HepG2 (cell line): ENCODE measurements at regions of chr18 and their contacts with region 1.

Region 1: GRCh38 chr18:70781860-70782453 is 493.1 kb downstream of the SOCS6 start:
- DNase-seq: peak; percentile 27
- ATAC-seq: peak; percentile 95
- H3K4me3 ChIP-seq: no peak overlapping the region
- H3K27ac ChIP-seq: no peak overlapping the region
- H3K4me1 ChIP-seq: no peaks in the 10 kb centered on the region
- H3K27me3 ChIP-seq: no peaks in the 10 kb centered on the region
- CTCF ChIP-seq: peak; percentile 82
- EP300 ChIP-seq: no peak
- POLR2A ChIP-seq: no peak
- RAD21 ChIP-seq: peak; percentile 20; the same call in 1 of the 2 replicates

Region 2: GRCh38 chr18:71105078-71105819 is 323.3 kb after region 1 on chr18:
- CTCF ChIA-PET with region 1: no interaction called
- POLR2A ChIA-PET with region 1: no interaction called
- in situ Hi-C with region 1: no loop called
- intact Hi-C with region 1: no loop called
- DNase-seq: no peak
- ATAC-seq: no peak
- H3K4me3 ChIP-seq: no peak overlapping the region
- H3K27ac ChIP-seq: no peak overlapping the region
- H3K4me1 ChIP-seq: no peaks in the 10 kb centered on the region
- H3K27me3 ChIP-seq: no peaks in the 10 kb centered on the region
- CTCF ChIP-seq: no peak
- EP300 ChIP-seq: no peak
- POLR2A ChIP-seq: no peak
- RAD21 ChIP-seq: no peak

Region 3: DNA sequence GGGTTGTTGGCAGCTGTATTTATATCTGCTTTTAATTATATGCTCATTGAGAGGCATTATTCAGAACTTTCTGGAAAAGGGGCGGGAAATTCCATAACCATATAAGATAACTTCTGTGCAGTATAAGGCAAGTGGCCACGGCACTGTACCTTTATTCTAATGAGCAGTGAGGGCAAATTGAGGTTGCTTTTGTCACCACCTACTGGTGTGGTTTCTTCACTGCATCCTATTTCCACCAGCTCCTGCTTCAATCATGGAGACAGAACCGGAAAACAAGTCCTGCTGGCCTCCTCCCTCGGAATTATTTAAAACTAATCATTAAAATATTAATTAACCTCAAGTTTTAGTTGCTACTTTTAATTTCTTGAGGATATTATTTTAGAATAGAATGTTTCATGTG is 1002.8 kb after region 1 on chr18:
- CTCF ChIA-PET with region 1: no interaction called
- POLR2A ChIA-PET with region 1: no interaction called
- in situ Hi-C with region 1: no loop called
- intact Hi-C with region 1: loop called (anchors 2 kb)
- DNase-seq: peak; percentile 10
- ATAC-seq: peak; percentile 56; the same call in 2 of the 3 replicates
- H3K4me3 ChIP-seq: no peak overlapping the region
- H3K27ac ChIP-seq: no peak overlapping the region
- H3K4me1 ChIP-seq: no peaks in the 10 kb centered on the region
- H3K27me3 ChIP-seq: no peaks in the 10 kb centered on the region
- CTCF ChIP-seq: peak; percentile 60
- EP300 ChIP-seq: no peak
- POLR2A ChIP-seq: no peak
- RAD21 ChIP-seq: no peak

Region 4: DNA sequence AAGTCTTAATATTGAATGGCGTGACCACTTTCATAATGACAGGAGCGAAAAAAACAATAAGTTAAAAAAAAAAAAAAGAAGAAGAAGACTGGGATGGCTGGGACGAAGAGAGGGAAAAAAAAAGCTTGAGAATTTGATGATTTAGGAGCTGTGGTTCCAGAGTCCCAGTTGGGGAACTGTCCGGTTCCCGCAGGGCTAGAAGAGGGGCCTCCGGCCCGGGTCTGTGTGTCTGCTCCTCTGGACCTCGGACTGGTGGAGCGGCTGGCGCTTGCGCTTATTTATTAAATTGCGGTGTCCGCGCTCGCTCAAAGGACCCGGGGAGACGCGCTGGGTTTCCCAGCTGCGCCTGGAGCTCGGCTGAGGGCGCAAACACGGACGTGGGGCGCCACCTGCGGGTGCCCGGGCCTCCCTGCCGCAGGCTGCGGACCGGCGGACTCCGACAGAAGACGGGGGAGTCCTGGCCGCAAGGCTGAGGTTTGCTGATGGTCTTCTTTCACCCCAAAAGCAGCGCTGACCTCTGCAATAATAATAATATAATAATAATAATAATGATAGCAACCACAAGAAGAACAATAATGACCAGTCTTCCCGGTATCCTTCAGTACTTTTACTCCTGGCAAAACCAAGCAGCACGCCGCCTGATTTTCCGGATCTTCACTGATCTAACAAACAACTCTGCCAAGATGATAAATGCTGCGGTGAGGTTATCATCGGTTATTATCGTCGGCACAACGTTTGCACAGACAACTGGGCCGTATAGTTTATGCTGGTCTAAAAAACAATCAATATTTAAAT is 1762.3 kb after region 1 on chr18 and contains the start of gene CBLN2:
- CTCF ChIA-PET with region 1: interaction called, 3 read pairs
- POLR2A ChIA-PET with region 1: no interaction called
- in situ Hi-C with region 1: loop called (anchors 25 kb)
- intact Hi-C with region 1: no loop called
- DNase-seq: peak; percentile 23
- ATAC-seq: peak; percentile 100
- H3K4me3 ChIP-seq: no peak within 1 kb of the TSS
- H3K27ac ChIP-seq: no peak within 1 kb of the TSS
- H3K4me1 ChIP-seq: no peaks in the 10 kb centered on the region
- H3K27me3 ChIP-seq: peaks cover 1 to 19% of the 10 kb centered on the region in 2 experiments; a peak in 3 of 5 replicates
- CTCF ChIP-seq: peak; percentile 88
- EP300 ChIP-seq: no peak
- POLR2A ChIP-seq: no peak
- RAD21 ChIP-seq: peak; percentile 85
- total RNA-seq, gene CBLN2: not detected in 2 replicates

Region 5: GRCh38 chr18:72672364-72673184 is 1890.6 kb after region 1 on chr18:
- CTCF ChIA-PET with region 1: no interaction called
- POLR2A ChIA-PET with region 1: no interaction called
- in situ Hi-C with region 1: no loop called
- intact Hi-C with region 1: loop called (anchors 5 kb)
- DNase-seq: peak; percentile 25
- ATAC-seq: peak; percentile 43; the same call in 1 of the 3 replicates
- H3K4me3 ChIP-seq: no peak overlapping the region
- H3K27ac ChIP-seq: no peak overlapping the region
- H3K4me1 ChIP-seq: no peaks in the 10 kb centered on the region
- H3K27me3 ChIP-seq: peaks cover 1 to 7% of the 10 kb centered on the region in 2 experiments; a peak in 1 of 5 replicates
- CTCF ChIP-seq: peak; percentile 53
- EP300 ChIP-seq: no peak
- POLR2A ChIP-seq: no peak
- RAD21 ChIP-seq: no peak